HEK293 (cell line): ENCODE measurements at regions of chr16 and their contacts with region 1.

Region 1: GRCh38 chr16:30844671-30845449 is 49.0 kb downstream of the BCL7C start:
- H3K4me3 ChIP-seq: no peak overlapping the region
- H3K27ac ChIP-seq: no peak overlapping the region
- H3K4me1 ChIP-seq: no peaks in the 10 kb centered on the region
- CTCF ChIP-seq: peak; percentile 91

Region 2: GRCh38 chr16:30805370-30806169 is 39.3 kb before region 1 on chr16:
- CTCF ChIA-PET with region 1: interaction called, 10 read pairs
- POLR2A ChIA-PET with region 1: interaction called, 4 read pairs
- H3K4me3 ChIP-seq: peak overlapping the region; percentile 74
- H3K27ac ChIP-seq: peak overlapping the region; percentile 86
- H3K4me1 ChIP-seq: no peaks in the 10 kb centered on the region
- CTCF ChIP-seq: peak; percentile 79

Region 3: GRCh38 chr16:30820952-30821760 is 23.7 kb before region 1 on chr16:
- CTCF ChIA-PET with region 1: interaction called, 10 read pairs
- POLR2A ChIA-PET with region 1: interaction called, 7 read pairs
- H3K4me3 ChIP-seq: no peak overlapping the region
- H3K27ac ChIP-seq: no peak overlapping the region
- H3K4me1 ChIP-seq: peaks cover 3% of the 10 kb centered on the region; the same call in 1 of the 2 replicates
- CTCF ChIP-seq: no peak

Region 4: DNA sequence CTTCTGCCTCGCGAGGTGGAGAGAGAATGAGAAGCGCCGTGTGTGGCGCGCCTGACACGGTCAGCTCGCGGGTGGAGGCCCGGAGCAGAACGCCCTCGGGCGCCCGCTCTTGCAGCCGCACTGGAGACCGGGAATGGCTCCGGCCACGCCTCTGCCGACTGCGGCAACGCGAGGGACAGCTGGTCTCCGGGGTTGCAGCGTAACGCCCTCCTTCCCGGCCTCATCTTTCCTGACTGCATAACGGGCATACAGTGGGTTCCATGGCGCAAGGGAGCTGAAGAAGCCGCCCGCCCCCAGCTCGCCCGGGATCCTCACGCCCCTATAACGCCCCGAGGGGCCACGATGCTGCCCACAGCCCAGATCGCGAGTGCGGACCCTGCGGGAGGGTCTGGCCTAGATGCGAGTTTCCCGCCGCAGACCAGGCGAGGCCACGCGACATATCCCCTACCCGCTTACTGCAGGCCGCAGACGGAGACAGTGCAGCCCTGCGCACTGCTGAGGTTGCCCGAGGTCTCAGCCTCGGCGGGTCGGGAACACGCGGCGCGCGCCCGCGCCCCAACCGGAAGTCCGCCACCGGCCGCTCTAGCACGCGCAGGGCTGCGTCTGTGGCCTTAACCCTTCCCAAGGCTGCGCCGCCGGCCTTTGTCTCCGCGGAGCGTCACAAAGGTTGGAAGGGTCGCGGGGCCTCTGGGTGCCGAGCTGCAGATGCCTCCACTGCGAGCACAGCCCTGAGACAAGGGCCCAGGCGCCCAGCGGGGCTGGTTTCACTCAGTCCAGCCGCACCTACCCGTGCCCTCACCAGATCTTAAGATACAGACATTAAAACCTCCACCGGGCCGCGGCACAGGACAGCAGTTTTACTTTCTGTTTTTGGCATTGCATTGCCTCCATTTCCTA is 30.2 kb after region 1 on chr16:
- CTCF ChIA-PET with region 1: interaction called, 21 read pairs
- POLR2A ChIA-PET with region 1: interaction called, 8 read pairs
- H3K4me3 ChIP-seq: peak overlapping the region; percentile 51
- H3K27ac ChIP-seq: peak overlapping the region; percentile 94
- H3K4me1 ChIP-seq: no peaks in the 10 kb centered on the region
- CTCF ChIP-seq: peak; percentile 46; the same call in 1 of the 2 replicates

Region 5: GRCh38 chr16:30902029-30902972 is 57.4 kb after region 1 on chr16:
- CTCF ChIA-PET with region 1: interaction called, 66 read pairs
- POLR2A ChIA-PET with region 1: interaction called, 8 read pairs
- H3K4me3 ChIP-seq: peak overlapping the region; percentile 51
- H3K27ac ChIP-seq: peak overlapping the region; percentile 77
- H3K4me1 ChIP-seq: no peaks in the 10 kb centered on the region
- CTCF ChIP-seq: peak; percentile 19; the same call in 1 of the 2 replicates

Region 6: GRCh38 chr16:30934827-30935557 is 90.1 kb after region 1 on chr16:
- CTCF ChIA-PET with region 1: interaction called, 58 read pairs
- POLR2A ChIA-PET with region 1: interaction called, 3 read pairs
- H3K4me3 ChIP-seq: no peak overlapping the region
- H3K27ac ChIP-seq: no peak overlapping the region
- H3K4me1 ChIP-seq: no peaks in the 10 kb centered on the region
- CTCF ChIP-seq: peak; percentile 82

Region 7: DNA sequence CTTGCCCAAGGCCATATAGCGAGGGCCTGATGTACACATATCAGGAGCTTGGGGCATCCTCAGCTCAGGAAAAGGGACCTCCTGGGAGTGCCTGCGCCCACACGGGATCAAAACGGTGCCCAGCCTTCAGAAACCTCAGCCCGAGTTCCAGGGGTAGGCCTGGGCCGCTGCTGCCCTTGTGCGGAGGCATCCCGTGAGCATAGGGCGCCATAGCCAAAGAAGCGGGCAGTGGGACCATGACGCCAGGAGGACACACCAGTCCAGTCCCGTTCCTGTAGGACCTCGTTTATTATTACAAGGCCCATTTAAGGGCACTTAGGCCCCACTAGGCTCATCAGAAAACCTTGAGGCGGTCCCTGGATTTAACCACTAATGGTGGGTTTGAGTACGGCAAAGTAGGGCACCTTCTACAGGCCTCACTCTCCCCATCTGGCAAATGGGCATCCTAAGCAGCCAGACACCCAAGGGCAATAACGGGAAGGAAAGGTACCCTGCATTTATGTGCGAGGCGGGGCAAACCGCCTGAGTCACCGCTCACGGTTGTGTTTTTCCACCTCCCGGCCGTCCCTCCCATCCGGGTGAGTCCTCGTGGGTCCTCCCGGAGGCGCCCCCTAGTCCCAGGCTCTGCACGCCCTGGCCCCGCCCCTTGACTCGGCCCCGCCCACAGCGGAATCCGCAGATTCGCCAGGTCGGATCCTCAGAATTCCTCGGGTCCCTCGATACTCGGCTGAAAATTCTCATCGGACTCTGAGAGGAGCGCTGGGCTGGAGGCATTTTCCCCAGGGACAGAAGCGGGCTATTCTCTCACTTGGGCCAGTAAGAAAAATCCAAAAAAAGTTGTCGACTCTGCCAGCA is 112.0 kb after region 1 on chr16:
- CTCF ChIA-PET with region 1: interaction called, 13 read pairs
- POLR2A ChIA-PET with region 1: interaction called, 4 read pairs
- H3K4me3 ChIP-seq: peak overlapping the region; percentile 90
- H3K27ac ChIP-seq: peak overlapping the region; percentile 96
- H3K4me1 ChIP-seq: peaks cover 2% of the 10 kb centered on the region; the same call in 1 of the 2 replicates
- CTCF ChIP-seq: peak; percentile 86